ENCODE measurements at regions of chr13 and their contacts with region 1.

Region 1: GRCh38 chr13:29260683-29261082 is 334.8 kb downstream of the SLC7A1 start:
- DNase-seq: no peak
- H3K4me3 ChIP-seq: no peak overlapping the region
- H3K27ac ChIP-seq: no peak overlapping the region
- H3K4me1 ChIP-seq: peaks cover 0 to 4% (median 0%) of the 10 kb centered on the region in 4 donors
- H3K27me3 ChIP-seq: no peaks in the 10 kb centered on the region
- CTCF ChIP-seq: peak in 3 of 4 experiments; percentile 8 to 35 (median 19)
- EP300 ChIP-seq: no peak
- POLR2A ChIP-seq: no peak

Region 2: GRCh38 chr13:28819735-28820098 is 441.0 kb before region 1 on chr13:
- intact Hi-C with region 1: loop called (anchors 2 kb)
- DNase-seq: no peak
- H3K4me3 ChIP-seq: peak overlapping the region in 3 of 4 donors; percentile 35 to 57 (median 51)
- H3K27ac ChIP-seq: no peak overlapping the region
- H3K4me1 ChIP-seq: peaks cover 0 to 18% (median 16%) of the 10 kb centered on the region in 4 donors
- H3K27me3 ChIP-seq: peaks cover 11 to 33% (median 31%) of the 10 kb centered on the region in 3 donors
- CTCF ChIP-seq: peak in 1 of 4 experiments; percentile 16
- EP300 ChIP-seq: no peak
- POLR2A ChIP-seq: no peak

Measured in sigmoid colon (tissue), 7 donors.